ENCODE measurements at regions of chr7 and their contacts with region 1.

Region 1: DNA sequence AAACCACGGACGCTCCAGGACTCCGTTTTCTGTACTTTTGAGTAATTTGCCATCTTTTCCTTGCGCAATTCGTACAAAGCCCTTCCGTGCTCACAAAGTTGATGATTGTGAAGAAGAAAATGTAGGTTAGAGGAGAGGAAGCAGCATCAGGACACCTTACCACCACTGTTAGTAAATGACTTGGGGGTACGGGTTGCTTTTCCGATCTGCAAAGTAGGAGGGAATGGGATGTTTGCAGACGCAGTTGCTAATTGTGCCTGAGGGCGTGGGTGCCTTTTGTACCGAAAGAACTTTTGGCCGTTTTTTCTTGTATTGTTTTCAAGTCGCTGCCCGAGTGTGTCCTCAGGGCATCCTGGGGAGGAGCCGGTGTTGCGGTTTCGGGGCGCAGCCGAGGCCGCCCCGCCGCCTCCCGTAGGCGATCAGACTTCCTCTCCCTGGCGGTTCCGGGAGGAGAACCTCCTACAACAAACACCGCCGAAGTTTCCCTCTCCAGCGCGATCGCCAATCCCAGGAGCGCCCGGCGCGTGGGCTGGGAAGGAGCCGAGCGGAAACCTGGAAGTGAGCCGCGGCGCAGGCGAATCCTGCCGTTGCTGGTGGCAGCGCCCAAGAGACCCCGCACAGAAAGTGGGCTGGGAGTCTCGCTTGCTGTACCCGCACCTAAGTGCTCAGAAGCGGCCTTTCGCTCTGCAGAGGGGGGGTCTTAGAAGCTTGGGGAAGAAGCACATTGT is 1.0 kb downstream of the PRR15 start:
- DNase-seq: peak; percentile 85
- H3K4me3 ChIP-seq: peak overlapping the region; percentile 64 to 84 (median 72)
- H3K27ac ChIP-seq: peak overlapping the region; percentile 78
- H3K4me1 ChIP-seq: peaks cover 29% of the 10 kb centered on the region
- H3K27me3 ChIP-seq: no peaks in the 10 kb centered on the region
- CTCF ChIP-seq: no peak

Region 2: DNA sequence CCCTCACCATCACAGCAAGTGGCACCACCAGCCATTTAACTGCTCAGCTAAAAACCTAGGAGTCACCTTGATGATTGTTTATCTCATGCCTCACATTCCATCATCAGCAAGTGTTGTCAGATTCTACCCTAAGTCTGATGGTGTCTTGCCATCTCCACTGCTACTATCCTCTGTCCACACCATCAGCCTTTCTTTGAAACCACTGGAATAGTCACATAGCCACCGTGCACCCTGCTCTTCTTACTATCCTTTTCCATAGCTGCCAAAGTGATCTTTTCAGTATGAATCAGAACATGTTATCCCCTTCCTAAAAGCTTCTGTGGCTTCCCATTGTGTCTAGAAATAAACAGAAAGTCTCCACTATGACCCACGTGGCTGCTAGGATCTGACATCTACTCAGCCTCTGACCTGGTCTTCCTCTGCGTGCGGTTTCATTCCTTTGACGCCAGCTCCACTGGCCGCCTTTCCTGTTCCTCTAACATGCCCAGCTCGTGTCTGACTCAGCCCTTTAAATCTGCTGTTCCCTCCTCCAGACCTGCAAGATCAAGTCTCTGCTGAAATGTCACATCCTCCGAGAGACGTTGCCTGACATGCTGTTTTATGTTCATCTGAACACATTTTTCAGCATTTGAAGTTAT is 386.6 kb before region 1 on chr7:
- CTCF ChIA-PET with region 1: no interaction called
- dilution Hi-C with region 1: no loop called
- in situ Hi-C with region 1: no loop called
- intact Hi-C with region 1: no loop called
- DNase-seq: no peak
- H3K4me3 ChIP-seq: no peak overlapping the region
- H3K27ac ChIP-seq: no peak overlapping the region
- H3K4me1 ChIP-seq: no peaks in the 10 kb centered on the region
- H3K27me3 ChIP-seq: no peaks in the 10 kb centered on the region
- CTCF ChIP-seq: no peak

Region 3: DNA sequence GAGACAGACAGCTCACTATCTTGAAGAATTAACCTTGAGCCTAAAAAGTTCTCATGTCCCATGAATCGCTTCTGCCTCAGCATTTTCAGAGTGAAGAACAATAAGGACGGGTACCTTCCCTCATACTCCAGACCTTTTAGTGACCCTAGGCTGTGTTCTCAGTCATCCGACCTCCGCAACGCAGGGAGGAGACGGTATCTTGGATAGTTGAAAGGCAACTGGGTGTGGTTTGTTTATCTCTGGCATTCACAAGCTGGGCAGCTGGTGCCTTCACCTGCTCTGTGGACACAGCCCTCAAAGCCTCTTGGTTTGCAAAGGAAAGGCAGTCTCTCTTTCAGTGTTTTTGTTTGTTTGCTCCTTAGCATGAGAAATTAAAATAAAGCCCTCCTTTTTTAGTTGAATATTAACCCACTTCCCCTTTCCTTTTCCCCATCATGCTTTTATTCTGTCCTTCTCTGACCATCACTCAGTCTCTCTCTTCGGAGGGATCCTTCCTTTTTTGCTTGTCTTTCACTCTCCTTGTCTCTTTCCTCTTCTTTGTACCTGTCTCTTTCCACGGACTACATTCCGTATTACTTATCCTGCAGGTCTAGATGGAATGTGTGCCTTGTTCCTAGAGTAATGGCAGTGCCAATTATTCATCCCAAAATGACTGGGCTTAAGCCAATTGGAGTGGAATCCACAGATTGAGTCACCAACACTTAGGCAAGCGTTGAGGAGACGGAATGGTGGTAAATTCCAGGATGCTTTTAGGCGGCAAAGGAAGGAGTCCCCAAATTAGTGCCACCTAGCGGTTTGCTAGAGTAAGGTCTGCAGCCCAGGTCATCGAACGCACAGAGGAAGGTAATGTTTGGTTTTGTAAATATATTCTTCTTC is 44.7 kb after region 1 on chr7:
- CTCF ChIA-PET with region 1: no interaction called
- dilution Hi-C with region 1: no loop called
- in situ Hi-C with region 1: no loop called
- intact Hi-C with region 1: loop called (anchors 1 kb)
- DNase-seq: peak; percentile 79
- H3K4me3 ChIP-seq: no peak overlapping the region
- H3K27ac ChIP-seq: no peak overlapping the region
- H3K4me1 ChIP-seq: peaks cover 55% of the 10 kb centered on the region
- H3K27me3 ChIP-seq: no peaks in the 10 kb centered on the region
- CTCF ChIP-seq: peak; percentile 86 to 94

Region 4: GRCh38 chr7:29622335-29623265 is 57.9 kb after region 1 on chr7:
- CTCF ChIA-PET with region 1: no interaction called
- dilution Hi-C with region 1: no loop called
- in situ Hi-C with region 1: loop called in 1 of 2 experiments (anchors 5 kb)
- intact Hi-C with region 1: loop called (anchors 5 kb)
- DNase-seq: peak; percentile 94
- H3K4me3 ChIP-seq: no peak overlapping the region
- H3K27ac ChIP-seq: peak overlapping the region; percentile 42
- H3K4me1 ChIP-seq: peaks cover 34% of the 10 kb centered on the region
- H3K27me3 ChIP-seq: no peaks in the 10 kb centered on the region
- CTCF ChIP-seq: no peak

Region 5: DNA sequence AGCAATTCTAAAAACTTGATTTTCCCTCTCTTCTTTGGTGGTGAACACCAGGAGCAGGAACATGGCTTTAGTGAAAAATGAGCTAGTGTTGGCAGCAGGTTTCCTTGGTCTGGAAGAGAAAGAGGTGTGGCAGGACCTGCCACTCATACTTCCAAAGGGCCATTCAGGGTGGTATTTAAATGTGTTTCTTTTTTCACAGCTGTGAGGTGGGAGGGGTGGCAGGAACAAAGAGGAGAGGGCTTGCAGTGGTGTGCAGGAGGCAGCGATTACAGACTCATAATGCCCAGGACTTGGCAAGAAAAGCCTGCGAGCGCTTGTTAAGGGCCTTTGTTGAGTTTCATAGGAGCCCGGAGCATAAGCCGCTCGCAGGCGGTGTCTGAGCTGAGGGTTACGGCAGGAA is 278.4 kb after region 1 on chr7:
- CTCF ChIA-PET with region 1: no interaction called
- dilution Hi-C with region 1: no loop called
- in situ Hi-C with region 1: no loop called
- intact Hi-C with region 1: no loop called
- DNase-seq: no peak
- H3K4me3 ChIP-seq: no peak overlapping the region
- H3K27ac ChIP-seq: no peak overlapping the region
- H3K4me1 ChIP-seq: no peaks in the 10 kb centered on the region
- H3K27me3 ChIP-seq: peaks cover 7% of the 10 kb centered on the region
- CTCF ChIP-seq: no peak

Measured in mammary epithelial cell (primary cell).